CD8-positive, alpha-beta T cell (primary cell): ENCODE measurements at regions of chr1 and their contacts with region 1.

Region 1: DNA sequence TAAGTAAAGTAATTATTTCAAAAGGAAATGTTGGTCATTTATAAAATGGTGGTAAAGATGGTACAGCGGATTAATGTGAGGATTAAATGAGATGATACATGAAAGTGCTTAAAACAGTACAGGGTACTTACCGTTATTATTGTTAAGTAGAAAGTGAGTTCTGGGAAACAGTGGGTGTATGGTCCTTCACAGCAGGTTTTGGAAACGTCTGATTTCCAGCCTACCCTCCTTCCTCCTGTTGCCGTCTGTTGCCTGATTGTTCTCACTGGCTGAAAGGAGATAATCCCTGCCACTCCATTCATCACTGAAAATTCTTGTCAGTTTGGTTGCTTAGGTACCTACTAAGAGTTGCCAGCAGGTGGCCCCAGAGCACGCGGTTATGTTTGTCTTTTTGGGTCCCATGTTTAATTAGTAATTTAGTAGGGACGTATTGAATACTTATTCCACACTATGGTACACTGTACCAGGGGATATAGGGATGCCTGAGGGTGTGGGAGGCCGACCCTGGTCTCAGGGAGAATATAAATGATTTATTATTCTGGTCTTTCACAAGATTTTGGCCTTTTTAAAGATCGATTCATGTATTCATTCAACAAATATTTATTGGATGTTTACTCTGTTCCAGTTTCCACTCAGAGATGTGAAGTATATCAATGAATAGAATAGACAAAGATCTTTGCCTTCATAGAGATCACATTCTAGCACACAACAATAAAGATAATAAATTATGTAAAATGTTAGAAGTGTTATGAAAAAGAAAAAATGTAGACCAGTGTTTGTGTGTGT is 30.8 kb upstream of the RPTN start:
- DNase-seq: peak; percentile 25 to 81 (median 67)
- ATAC-seq: peak; percentile 71
- H3K4me3 ChIP-seq: peak overlapping the region; percentile 78 to 87
- H3K4me3 Mint-ChIP-seq: peak overlapping the region; percentile 78
- H3K27ac ChIP-seq: no peak overlapping the region
- H3K27ac Mint-ChIP-seq: peak overlapping the region; percentile 34
- H3K4me1 ChIP-seq: no peaks in the 10 kb centered on the region
- H3K4me1 Mint-ChIP-seq: peaks cover 4% of the 10 kb centered on the region
- H3K27me3 ChIP-seq: no peaks in the 10 kb centered on the region
- H3K27me3 Mint-ChIP-seq: peaks cover 2% of the 10 kb centered on the region
- CTCF ChIP-seq: peak; percentile 87

Region 2: GRCh38 chr1:151934048-151934493 is 255.8 kb before region 1 on chr1:
- CTCF ChIA-PET with region 1: interaction called, 3 read pairs
- POLR2A ChIA-PET with region 1: no interaction called
- intact Hi-C with region 1: loop called in 1 of 2 experiments (anchors 2 kb)
- DNase-seq: peak; percentile 10 to 81 (median 38)
- ATAC-seq: peak; percentile 78
- H3K4me3 ChIP-seq: no peak overlapping the region
- H3K4me3 Mint-ChIP-seq: no peak overlapping the region
- H3K27ac ChIP-seq: no peak overlapping the region
- H3K27ac Mint-ChIP-seq: no peak overlapping the region
- H3K4me1 ChIP-seq: peaks cover 3% of the 10 kb centered on the region
- H3K4me1 Mint-ChIP-seq: peaks cover 2% of the 10 kb centered on the region
- H3K27me3 ChIP-seq: no peaks in the 10 kb centered on the region
- H3K27me3 Mint-ChIP-seq: no peaks in the 10 kb centered on the region
- CTCF ChIP-seq: peak; percentile 83

Region 3: DNA sequence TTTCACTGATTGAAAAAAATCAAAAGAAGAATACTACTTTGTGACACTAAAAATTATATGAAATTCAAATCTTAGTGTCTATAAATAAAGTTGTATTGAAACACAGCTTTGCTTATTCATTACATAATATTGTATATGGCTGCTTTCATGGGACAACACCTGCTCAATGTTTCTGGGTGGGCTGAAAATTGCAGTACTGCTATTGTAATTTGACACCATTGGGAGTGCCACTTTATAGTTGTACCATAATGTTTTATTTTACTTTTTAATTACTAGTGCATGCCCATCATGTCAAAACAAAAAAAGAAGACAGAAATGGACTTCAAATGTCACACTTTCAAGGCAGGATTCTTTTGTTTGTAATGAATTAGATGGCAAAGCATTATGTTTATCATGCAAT is 14.3 kb before region 1 on chr1:
- CTCF ChIA-PET with region 1: interaction called, 22 read pairs
- POLR2A ChIA-PET with region 1: no interaction called
- intact Hi-C with region 1: no loop called
- DNase-seq: no peak
- ATAC-seq: no peak
- H3K4me3 ChIP-seq: no peak overlapping the region
- H3K4me3 Mint-ChIP-seq: no peak overlapping the region
- H3K27ac ChIP-seq: no peak overlapping the region
- H3K27ac Mint-ChIP-seq: no peak overlapping the region
- H3K4me1 ChIP-seq: no peaks in the 10 kb centered on the region
- H3K4me1 Mint-ChIP-seq: no peaks in the 10 kb centered on the region
- H3K27me3 ChIP-seq: no peaks in the 10 kb centered on the region
- H3K27me3 Mint-ChIP-seq: peaks cover 8% of the 10 kb centered on the region
- CTCF ChIP-seq: no peak

Region 4: GRCh38 chr1:152347116-152347728 is 157.4 kb after region 1 on chr1:
- CTCF ChIA-PET with region 1: interaction called, 4 read pairs
- POLR2A ChIA-PET with region 1: no interaction called
- intact Hi-C with region 1: loop called (anchors 2 to 5 kb)
- DNase-seq: peak in 8 of 9 experiments; percentile 5 to 71 (median 36)
- ATAC-seq: peak; percentile 58
- H3K4me3 ChIP-seq: no peak overlapping the region
- H3K4me3 Mint-ChIP-seq: no peak overlapping the region
- H3K27ac ChIP-seq: no peak overlapping the region
- H3K27ac Mint-ChIP-seq: no peak overlapping the region
- H3K4me1 ChIP-seq: no peaks in the 10 kb centered on the region
- H3K4me1 Mint-ChIP-seq: no peaks in the 10 kb centered on the region
- H3K27me3 ChIP-seq: no peaks in the 10 kb centered on the region
- H3K27me3 Mint-ChIP-seq: peaks cover 8% of the 10 kb centered on the region
- CTCF ChIP-seq: peak; percentile 98

Region 5: GRCh38 chr1:152440635-152441471 is 251.0 kb after region 1 on chr1:
- CTCF ChIA-PET with region 1: interaction called, 8 read pairs
- POLR2A ChIA-PET with region 1: no interaction called
- intact Hi-C with region 1: loop called (anchors 1 to 5 kb)
- DNase-seq: peak; percentile 35 to 82 (median 63)
- ATAC-seq: peak; percentile 95
- H3K4me3 ChIP-seq: no peak overlapping the region
- H3K4me3 Mint-ChIP-seq: no peak overlapping the region
- H3K27ac ChIP-seq: no peak overlapping the region
- H3K27ac Mint-ChIP-seq: no peak overlapping the region
- H3K4me1 ChIP-seq: no peaks in the 10 kb centered on the region
- H3K4me1 Mint-ChIP-seq: peaks cover 3% of the 10 kb centered on the region
- H3K27me3 ChIP-seq: no peaks in the 10 kb centered on the region
- H3K27me3 Mint-ChIP-seq: peaks cover 27% of the 10 kb centered on the region
- CTCF ChIP-seq: peak; percentile 75

Region 6: DNA sequence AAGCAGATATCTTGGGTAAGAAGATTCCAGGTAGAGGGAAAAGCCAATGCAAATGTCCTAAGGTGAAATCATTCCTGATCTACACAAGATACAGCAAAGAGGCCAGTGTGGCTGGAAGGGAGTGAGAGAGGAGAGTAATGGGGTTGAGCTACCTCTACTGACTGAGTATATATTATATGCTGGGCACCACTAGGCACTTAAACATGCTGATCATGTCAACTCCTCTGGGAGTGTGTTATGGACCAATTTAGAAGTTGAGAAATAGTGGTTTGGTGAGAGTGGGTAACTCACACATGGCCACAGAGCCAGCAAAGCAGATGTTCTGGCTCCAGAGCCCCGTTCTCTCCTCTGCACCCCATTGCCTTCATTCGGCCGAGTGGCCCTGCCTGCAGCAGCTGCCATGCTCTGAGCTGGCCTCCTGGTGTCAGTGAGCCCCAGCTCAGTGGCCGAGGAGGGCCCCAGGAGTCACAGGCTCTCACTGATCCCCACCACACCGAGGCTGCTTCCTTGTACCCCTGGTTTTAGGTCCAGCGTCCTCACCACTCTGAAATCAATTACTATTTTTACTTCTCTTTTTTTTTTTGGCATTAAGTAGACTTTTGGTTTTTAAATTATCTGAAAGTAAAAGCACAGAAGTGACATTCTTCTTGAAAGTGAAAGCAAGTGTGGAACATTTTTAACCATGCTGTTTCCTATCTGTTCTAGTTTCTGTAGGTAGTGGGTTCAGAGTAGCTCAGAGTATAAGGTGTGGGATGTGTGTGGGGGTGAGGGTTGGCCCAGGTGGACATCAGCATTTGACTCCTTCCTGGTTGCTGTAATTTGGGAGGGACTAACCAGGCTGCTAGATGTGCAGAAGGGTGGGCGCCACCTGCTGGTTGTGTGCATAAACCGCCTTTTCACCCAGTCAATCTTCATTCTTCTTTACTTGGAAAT is 270.0 kb after region 1 on chr1:
- CTCF ChIA-PET with region 1: interaction called, 89 read pairs
- POLR2A ChIA-PET with region 1: interaction called, 3 read pairs
- intact Hi-C with region 1: loop called (anchors 1 kb)
- DNase-seq: peak; percentile 45 to 86 (median 74)
- ATAC-seq: peak; percentile 66
- H3K4me3 ChIP-seq: peak overlapping the region in 1 of 2 experiments; percentile 16
- H3K4me3 Mint-ChIP-seq: peak overlapping the region; percentile 70
- H3K27ac ChIP-seq: peak overlapping the region in 1 of 2 experiments; percentile 72
- H3K27ac Mint-ChIP-seq: peak overlapping the region; percentile 83
- H3K4me1 ChIP-seq: no peaks in the 10 kb centered on the region
- H3K4me1 Mint-ChIP-seq: peaks cover 26% of the 10 kb centered on the region
- H3K27me3 ChIP-seq: no peaks in the 10 kb centered on the region
- H3K27me3 Mint-ChIP-seq: peaks cover 2% of the 10 kb centered on the region
- CTCF ChIP-seq: peak; percentile 70

Region 7: GRCh38 chr1:152941021-152941711 is 751.3 kb after region 1 on chr1:
- CTCF ChIA-PET with region 1: no interaction called
- POLR2A ChIA-PET with region 1: no interaction called
- intact Hi-C with region 1: no loop called
- DNase-seq: no peak
- ATAC-seq: no peak
- H3K4me3 ChIP-seq: no peak overlapping the region
- H3K4me3 Mint-ChIP-seq: no peak overlapping the region
- H3K27ac ChIP-seq: no peak overlapping the region
- H3K27ac Mint-ChIP-seq: no peak overlapping the region
- H3K4me1 ChIP-seq: no peaks in the 10 kb centered on the region
- H3K4me1 Mint-ChIP-seq: no peaks in the 10 kb centered on the region
- H3K27me3 ChIP-seq: no peaks in the 10 kb centered on the region
- H3K27me3 Mint-ChIP-seq: peaks cover 7% of the 10 kb centered on the region
- CTCF ChIP-seq: no peak